ENCODE measurements at regions of chr11 and their contacts with region 1.

Region 1: GRCh38 chr11:57249384-57250319 is 12.6 kb upstream of the APLNR start:
- DNase-seq: peak; percentile 74
- ATAC-seq: peak; percentile 15; the same call in 1 of the 2 replicates
- H3K4me3 Mint-ChIP-seq: no peak overlapping the region
- H3K27ac Mint-ChIP-seq: no peak overlapping the region
- H3K4me1 Mint-ChIP-seq: no peaks in the 10 kb centered on the region; the same call in 1 of the 2 replicates
- H3K27me3 Mint-ChIP-seq: no peaks in the 10 kb centered on the region
- CTCF ChIP-seq: peak; percentile 85

Region 2: GRCh38 chr11:56841210-56841810 is 408.3 kb before region 1 on chr11:
- CTCF ChIA-PET with region 1: interaction called, 106 read pairs
- POLR2A ChIA-PET with region 1: interaction called, 3 read pairs
- DNase-seq: peak; percentile 55
- ATAC-seq: peak; percentile 44; the same call in 1 of the 2 replicates
- H3K4me3 Mint-ChIP-seq: no peak overlapping the region
- H3K27ac Mint-ChIP-seq: no peak overlapping the region
- H3K4me1 Mint-ChIP-seq: no peaks in the 10 kb centered on the region
- H3K27me3 Mint-ChIP-seq: no peaks in the 10 kb centered on the region
- CTCF ChIP-seq: peak; percentile 62

Region 3: GRCh38 chr11:57131080-57131790 is 118.4 kb before region 1 on chr11:
- CTCF ChIA-PET with region 1: interaction called, 363 read pairs
- POLR2A ChIA-PET with region 1: interaction called, 13 read pairs
- DNase-seq: peak; percentile 79
- ATAC-seq: peak; percentile 99
- H3K4me3 Mint-ChIP-seq: no peak overlapping the region
- H3K27ac Mint-ChIP-seq: no peak overlapping the region
- H3K4me1 Mint-ChIP-seq: peaks cover 5% of the 10 kb centered on the region; the same call in 1 of the 2 replicates
- H3K27me3 Mint-ChIP-seq: no peaks in the 10 kb centered on the region; the same call in 1 of the 2 replicates
- CTCF ChIP-seq: peak; percentile 56

Region 4: GRCh38 chr11:57163160-57163868 is 86.3 kb before region 1 on chr11:
- CTCF ChIA-PET with region 1: interaction called, 16 read pairs
- POLR2A ChIA-PET with region 1: interaction called, 6 read pairs
- DNase-seq: no peak
- ATAC-seq: no peak
- H3K4me3 Mint-ChIP-seq: no peak overlapping the region
- H3K27ac Mint-ChIP-seq: no peak overlapping the region
- H3K4me1 Mint-ChIP-seq: no peaks in the 10 kb centered on the region
- H3K27me3 Mint-ChIP-seq: peaks cover 14% of the 10 kb centered on the region
- CTCF ChIP-seq: no peak

Region 5: GRCh38 chr11:57205041-57205671 is 44.5 kb before region 1 on chr11:
- CTCF ChIA-PET with region 1: interaction called, 48 read pairs
- POLR2A ChIA-PET with region 1: no interaction called
- DNase-seq: no peak
- ATAC-seq: peak; percentile 89
- H3K4me3 Mint-ChIP-seq: peak overlapping the region; percentile 28; the same call in 1 of the 2 replicates
- H3K27ac Mint-ChIP-seq: peak overlapping the region; percentile 85; the same call in 1 of the 2 replicates
- H3K4me1 Mint-ChIP-seq: peaks cover 39% of the 10 kb centered on the region
- H3K27me3 Mint-ChIP-seq: peaks cover 4% of the 10 kb centered on the region
- CTCF ChIP-seq: no peak

Region 6: GRCh38 chr11:57260937-57261783 is 11.5 kb after region 1 on chr11:
- CTCF ChIA-PET with region 1: interaction called, 16 read pairs
- POLR2A ChIA-PET with region 1: no interaction called
- DNase-seq: no peak
- ATAC-seq: no peak
- H3K4me3 Mint-ChIP-seq: no peak overlapping the region
- H3K27ac Mint-ChIP-seq: peak overlapping the region; percentile 29
- H3K4me1 Mint-ChIP-seq: peaks cover 31% of the 10 kb centered on the region
- H3K27me3 Mint-ChIP-seq: peaks cover 4% of the 10 kb centered on the region; the same call in 1 of the 2 replicates
- CTCF ChIP-seq: no peak

Region 7: DNA sequence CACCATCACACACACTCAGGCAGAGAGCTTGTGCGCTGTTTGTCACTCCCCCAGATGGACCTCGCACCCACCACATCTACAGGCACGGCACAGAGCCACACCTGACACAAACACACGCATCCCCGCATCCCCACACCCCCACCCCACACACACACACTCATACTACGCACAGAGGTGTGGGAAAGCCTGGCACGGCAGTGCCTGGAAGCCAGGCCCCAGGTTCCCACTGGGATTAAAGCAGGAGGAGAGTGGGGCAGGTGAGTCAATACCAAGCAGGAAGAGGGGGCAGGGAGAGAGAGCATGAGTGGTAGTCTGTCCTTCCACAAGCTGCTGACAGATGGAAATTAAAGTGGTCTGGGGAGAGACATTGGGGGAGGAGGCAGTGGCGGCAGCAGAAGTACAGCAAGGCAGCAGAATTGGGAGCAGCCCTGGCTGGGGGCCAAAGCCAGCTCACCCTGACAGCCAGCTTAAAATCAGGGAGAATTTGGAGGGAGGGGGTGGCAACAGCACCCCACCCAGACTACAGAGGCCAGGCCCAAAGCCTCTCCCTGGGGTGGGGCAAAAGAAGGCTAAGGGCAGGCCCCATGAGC is 54.4 kb after region 1 on chr11:
- CTCF ChIA-PET with region 1: interaction called, 22 read pairs
- POLR2A ChIA-PET with region 1: no interaction called
- DNase-seq: no peak
- ATAC-seq: no peak
- H3K4me3 Mint-ChIP-seq: no peak overlapping the region
- H3K27ac Mint-ChIP-seq: peak overlapping the region; percentile 41
- H3K4me1 Mint-ChIP-seq: peaks cover 16% of the 10 kb centered on the region
- H3K27me3 Mint-ChIP-seq: no peaks in the 10 kb centered on the region
- CTCF ChIP-seq: no peak

Region 8: GRCh38 chr11:57406337-57406904 is 156.8 kb after region 1 on chr11:
- CTCF ChIA-PET with region 1: no interaction called
- POLR2A ChIA-PET with region 1: no interaction called
- DNase-seq: no peak
- ATAC-seq: no peak
- H3K4me3 Mint-ChIP-seq: no peak overlapping the region
- H3K27ac Mint-ChIP-seq: no peak overlapping the region
- H3K4me1 Mint-ChIP-seq: no peaks in the 10 kb centered on the region
- H3K27me3 Mint-ChIP-seq: peaks cover 7% of the 10 kb centered on the region; the same call in 1 of the 2 replicates
- CTCF ChIP-seq: no peak

Region 9: DNA sequence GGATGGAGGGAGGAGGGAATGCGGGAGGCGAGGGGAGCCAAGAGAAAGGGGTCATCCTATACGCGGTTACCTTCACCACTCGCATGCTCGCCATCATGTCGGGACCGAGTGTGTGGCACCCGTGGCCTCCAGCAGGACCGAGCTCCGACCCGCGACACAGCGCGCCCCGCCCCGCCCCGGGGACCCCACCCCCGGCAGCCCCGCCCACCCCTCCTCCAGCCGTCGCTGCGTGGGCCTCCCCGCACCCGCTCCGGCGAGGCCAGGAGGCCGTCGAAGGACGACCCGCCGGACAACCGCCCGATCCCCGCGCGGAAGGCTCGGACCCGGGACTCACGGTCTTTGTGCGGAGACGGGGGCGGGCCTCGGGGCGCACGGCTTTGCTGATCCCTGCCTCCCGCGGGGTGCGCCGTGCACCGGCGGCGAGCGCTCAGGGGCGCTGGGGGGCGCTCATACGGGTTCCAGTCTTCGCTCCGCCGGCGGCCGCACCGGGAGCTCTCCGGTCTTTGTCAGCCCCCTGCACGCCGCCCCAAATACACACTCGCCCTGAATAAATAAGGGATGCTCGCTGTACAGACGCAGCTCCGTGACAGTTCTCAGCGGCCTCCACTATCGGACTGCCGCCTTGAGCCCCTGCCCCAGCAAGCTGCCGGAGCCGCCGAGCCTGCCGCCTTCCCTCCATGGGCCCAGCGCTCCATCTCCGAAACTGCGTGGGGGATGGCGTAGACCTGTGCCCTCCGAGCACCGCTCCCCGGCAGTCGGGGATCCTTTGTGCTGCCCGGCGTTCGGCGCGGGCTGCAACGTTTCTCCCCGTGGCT is 318.1 kb after region 1 on chr11 and contains the start of gene UBE2L6:
- CTCF ChIA-PET with region 1: no interaction called
- POLR2A ChIA-PET with region 1: no interaction called
- DNase-seq: peak; percentile 91
- ATAC-seq: peak; percentile 82
- H3K4me3 Mint-ChIP-seq: peak within 1 kb of the TSS; percentile 95
- H3K27ac Mint-ChIP-seq: peak within 1 kb of the TSS; percentile 89
- H3K4me1 Mint-ChIP-seq: peaks cover 28% of the 10 kb centered on the region
- H3K27me3 Mint-ChIP-seq: peaks cover 7% of the 10 kb centered on the region
- CTCF ChIP-seq: no peak
- total RNA-seq, gene UBE2L6: 38.8 to 48.5 TPM (median 47.4 TPM) in 3 replicates